Body of pancreas (tissue), 4 donors: ENCODE measurements at regions of chr10 and their contacts with region 1.

Region 1: DNA sequence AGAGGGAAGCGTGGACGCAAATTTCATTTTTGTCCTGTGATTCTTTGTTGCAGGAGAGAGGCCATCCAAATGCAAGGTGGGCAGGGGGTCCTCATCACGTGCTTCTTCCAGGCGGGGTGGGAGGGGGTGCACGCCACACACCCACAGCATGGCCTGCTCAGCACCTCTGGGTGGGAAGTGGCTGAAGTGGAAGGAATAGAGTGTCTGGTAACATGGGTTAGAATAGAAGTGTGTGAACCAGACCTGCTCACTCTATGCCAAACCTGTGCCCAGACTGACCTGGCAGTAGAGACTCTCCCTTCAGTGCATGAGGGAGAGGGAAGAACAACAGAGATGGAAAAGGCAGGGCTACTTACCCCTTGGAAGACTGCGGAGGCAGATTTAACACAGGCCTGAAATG is 21.7 kb downstream of the ZNF503 start:
- DNase-seq: no peak
- ATAC-seq: no peak
- H3K4me3 ChIP-seq: no peak overlapping the region
- H3K27ac ChIP-seq: peak overlapping the region in 3 of 4 donors; percentile 21 to 56 (median 40)
- H3K4me1 ChIP-seq: peaks cover 14% of the 10 kb centered on the region
- H3K27me3 ChIP-seq: no peaks in the 10 kb centered on the region
- CTCF ChIP-seq: no peak
- POLR2A ChIP-seq: no peak

Region 2: GRCh38 chr10:75091146-75091545 is 288.7 kb before region 1 on chr10:
- intact Hi-C with region 1: no loop called
- DNase-seq: no peak
- ATAC-seq: no peak
- H3K4me3 ChIP-seq: no peak overlapping the region
- H3K27ac ChIP-seq: no peak overlapping the region
- H3K4me1 ChIP-seq: peaks cover 7% of the 10 kb centered on the region
- H3K27me3 ChIP-seq: no peaks in the 10 kb centered on the region
- CTCF ChIP-seq: no peak
- POLR2A ChIP-seq: no peak

Region 3: GRCh38 chr10:75180592-75180991 is 199.2 kb before region 1 on chr10:
- intact Hi-C with region 1: no loop called
- DNase-seq: no peak
- ATAC-seq: no peak
- H3K4me3 ChIP-seq: no peak overlapping the region
- H3K27ac ChIP-seq: no peak overlapping the region
- H3K4me1 ChIP-seq: no peaks in the 10 kb centered on the region
- H3K27me3 ChIP-seq: no peaks in the 10 kb centered on the region
- CTCF ChIP-seq: no peak
- POLR2A ChIP-seq: no peak

Region 4: DNA sequence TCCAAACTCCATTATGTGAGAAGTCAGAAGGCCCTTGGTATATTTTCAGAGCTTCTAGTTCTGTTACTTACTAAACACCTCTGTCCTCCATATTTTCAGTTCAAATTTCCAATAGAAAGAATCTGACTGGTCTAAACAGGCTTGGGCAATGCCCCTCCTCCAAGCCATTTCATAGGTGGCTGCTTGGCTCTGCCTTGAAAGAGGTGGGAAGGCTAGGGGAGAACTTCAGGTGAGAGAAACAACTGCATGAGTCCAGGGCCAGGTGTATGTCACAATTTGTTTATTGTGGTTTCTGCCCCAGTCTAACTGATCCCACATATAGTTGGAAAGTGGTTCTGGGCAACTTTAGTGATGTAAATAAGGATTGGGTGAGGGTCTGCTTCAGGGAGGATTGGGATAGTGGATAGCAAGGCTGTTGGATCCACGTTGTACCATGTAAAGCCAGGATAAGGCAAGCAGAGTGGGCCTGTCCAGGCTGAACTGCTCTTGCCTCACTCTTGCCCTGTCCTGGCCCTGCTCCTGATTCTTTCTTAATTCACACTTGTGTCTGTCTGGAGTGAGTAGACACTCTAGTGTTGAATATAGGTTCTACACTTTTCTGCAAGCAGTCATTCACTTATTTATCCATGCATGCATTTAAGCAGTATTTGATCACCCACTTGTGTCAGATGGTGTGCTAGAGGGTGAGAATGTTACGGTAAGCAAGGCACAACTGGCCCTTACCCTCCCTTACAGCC is 76.6 kb before region 1 on chr10:
- intact Hi-C with region 1: loop called (anchors 10 kb)
- DNase-seq: peak in 2 of 4 donors; percentile 34 to 46
- ATAC-seq: peak; percentile 64
- H3K4me3 ChIP-seq: no peak overlapping the region
- H3K27ac ChIP-seq: peak overlapping the region in 2 of 4 donors; percentile 40 to 52
- H3K4me1 ChIP-seq: no peaks in the 10 kb centered on the region
- H3K27me3 ChIP-seq: no peaks in the 10 kb centered on the region
- CTCF ChIP-seq: peak in 4 of 7 experiments; percentile 9 to 41 (median 36)
- POLR2A ChIP-seq: no peak

Region 5: GRCh38 chr10:75449382-75450070 is 69.7 kb after region 1 on chr10:
- intact Hi-C with region 1: no loop called
- DNase-seq: no peak
- ATAC-seq: no peak
- H3K4me3 ChIP-seq: no peak overlapping the region
- H3K27ac ChIP-seq: no peak overlapping the region
- H3K4me1 ChIP-seq: peaks cover 14% of the 10 kb centered on the region
- H3K27me3 ChIP-seq: no peaks in the 10 kb centered on the region
- CTCF ChIP-seq: no peak
- POLR2A ChIP-seq: no peak